CD4-positive, alpha-beta T cell (primary cell): ENCODE measurements at regions of chr19 and their contacts with region 1.

Region 1: DNA sequence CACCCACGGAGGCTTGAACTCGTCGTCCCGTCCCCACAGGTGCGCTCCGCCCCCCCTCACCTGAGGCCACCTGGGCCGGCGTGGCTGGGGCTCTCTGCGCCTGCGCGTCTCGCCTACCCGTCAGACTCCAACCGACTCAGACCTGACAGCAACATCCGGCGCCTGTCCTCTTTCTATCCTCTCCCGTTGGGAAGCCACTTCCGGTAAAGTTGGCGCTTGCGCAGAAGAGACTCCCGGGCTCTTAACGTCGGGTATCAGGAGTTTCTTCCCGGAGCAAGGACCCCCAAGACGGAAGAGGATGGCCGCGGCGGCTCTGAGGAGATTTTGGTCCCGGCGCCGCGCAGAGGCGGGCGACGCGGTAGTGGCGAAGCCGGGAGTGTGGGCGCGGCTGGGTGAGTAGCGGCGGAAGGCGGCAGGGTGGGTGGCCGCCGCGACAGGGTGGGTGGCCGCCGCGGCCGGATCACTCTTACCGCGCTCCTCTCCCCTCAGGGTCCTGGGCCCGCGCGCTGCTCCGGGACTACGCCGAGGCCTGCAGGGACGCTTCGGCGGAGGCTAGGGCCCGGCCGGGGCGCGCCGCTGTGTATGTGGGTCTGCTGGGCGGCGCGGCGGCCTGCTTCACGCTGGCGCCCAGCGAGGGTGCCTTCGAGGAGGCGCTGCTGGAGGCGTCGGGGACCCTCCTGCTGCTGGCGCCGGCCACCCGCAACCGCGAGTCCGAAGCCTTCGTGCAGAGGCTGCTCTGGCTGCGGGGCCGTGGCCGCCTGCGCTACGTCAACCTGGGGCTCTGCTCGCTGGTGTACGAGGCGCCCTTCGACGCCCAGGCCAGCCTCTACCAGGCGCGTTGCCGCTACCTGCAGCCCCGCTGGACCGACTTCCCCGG is at the starts of genes TIMM29 and YIPF2:
- DNase-seq: peak; percentile 87 to 97 (median 92)
- ATAC-seq: peak; percentile 90
- H3K4me3 ChIP-seq: peak within 1 kb of the TSS; percentile 75
- H3K4me3 Mint-ChIP-seq: peak within 1 kb of the TSS; percentile 97
- H3K27ac ChIP-seq: peak within 1 kb of the TSS; percentile 46 to 61
- H3K27ac Mint-ChIP-seq: peak within 1 kb of the TSS; percentile 89
- H3K4me1 ChIP-seq: peaks cover 33% of the 10 kb centered on the region
- H3K4me1 Mint-ChIP-seq: peaks cover 16% of the 10 kb centered on the region
- H3K27me3 ChIP-seq: no peaks in the 10 kb centered on the region
- H3K27me3 Mint-ChIP-seq: no peaks in the 10 kb centered on the region
- CTCF ChIP-seq: no peak
- total RNA-seq, gene TIMM29: 22.6 to 24.8 TPM
- total RNA-seq, gene YIPF2: 21.1 to 21.7 TPM

Region 2: DNA sequence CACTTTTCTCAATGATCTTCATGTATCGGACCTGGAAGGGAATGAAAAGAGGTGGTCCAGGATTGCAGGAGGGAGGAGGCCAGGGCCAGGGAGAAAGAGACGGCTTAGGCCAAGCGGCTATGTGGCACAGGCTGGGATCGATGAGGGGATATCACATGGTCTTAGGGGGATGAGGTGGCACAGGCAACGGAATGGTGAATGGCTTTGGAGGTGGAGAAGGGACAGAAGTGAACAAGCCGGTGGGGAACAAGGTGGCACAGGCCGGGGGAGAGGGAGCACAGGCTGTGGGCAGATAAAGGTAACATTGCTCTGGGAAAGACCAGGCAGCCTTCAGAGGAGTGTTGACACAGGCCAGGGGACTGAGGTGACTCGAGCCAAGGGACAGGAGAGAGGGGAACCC is 354.3 kb before region 1 on chr19:
- CTCF ChIA-PET with region 1: no interaction called
- POLR2A ChIA-PET with region 1: no interaction called
- intact Hi-C with region 1: loop called in 1 of 2 experiments (anchors 5 kb)
- DNase-seq: peak in 1 of 14 experiments; percentile 19
- ATAC-seq: no peak
- H3K4me3 ChIP-seq: no peak overlapping the region
- H3K4me3 Mint-ChIP-seq: no peak overlapping the region
- H3K27ac ChIP-seq: no peak overlapping the region
- H3K27ac Mint-ChIP-seq: no peak overlapping the region
- H3K4me1 ChIP-seq: peaks cover 11% of the 10 kb centered on the region
- H3K4me1 Mint-ChIP-seq: peaks cover 12% of the 10 kb centered on the region
- H3K27me3 ChIP-seq: no peaks in the 10 kb centered on the region
- H3K27me3 Mint-ChIP-seq: no peaks in the 10 kb centered on the region
- CTCF ChIP-seq: no peak

Region 3: DNA sequence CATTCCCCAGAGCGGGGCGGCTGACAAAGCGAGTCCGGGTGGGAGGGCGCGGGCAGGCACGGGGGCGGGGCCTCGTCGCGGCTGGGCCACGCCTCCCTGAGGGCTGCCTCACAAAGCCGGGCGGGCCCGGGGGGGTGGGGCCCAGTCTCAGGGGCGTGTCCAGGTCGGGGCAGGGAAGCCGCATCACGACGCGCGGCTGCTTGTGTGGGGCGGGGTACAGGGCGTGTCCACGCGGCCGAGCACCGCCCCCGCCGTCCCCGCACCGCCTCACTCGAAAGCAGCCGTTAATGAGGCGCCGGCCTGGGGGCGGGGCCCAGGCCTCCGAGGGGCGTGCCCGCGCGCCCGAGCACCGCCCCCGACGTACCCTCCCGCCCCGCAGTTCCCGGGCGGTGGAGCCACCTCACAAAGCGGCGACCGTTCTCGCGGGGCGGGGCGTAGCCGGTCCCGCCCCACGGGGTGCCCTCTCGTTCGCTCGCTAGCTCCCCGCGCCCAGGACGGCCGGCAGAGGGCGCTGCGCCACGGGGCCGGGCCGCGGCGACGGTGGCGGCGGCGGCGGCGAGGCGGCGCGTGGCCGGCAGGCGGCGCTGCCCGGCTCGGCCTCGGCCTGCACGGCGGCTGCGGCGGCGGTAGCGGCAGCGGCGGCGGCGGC is 57.7 kb before region 1 on chr19 and contains the start of gene CARM1:
- CTCF ChIA-PET with region 1: no interaction called
- POLR2A ChIA-PET with region 1: no interaction called
- intact Hi-C with region 1: loop called (anchors 1 to 10 kb)
- DNase-seq: peak; percentile 98 to 100 (median 99)
- ATAC-seq: peak; percentile 83
- H3K4me3 ChIP-seq: peak within 1 kb of the TSS; percentile 69
- H3K4me3 Mint-ChIP-seq: peak within 1 kb of the TSS; percentile 86
- H3K27ac ChIP-seq: peak within 1 kb of the TSS in 1 of 2 donors; percentile 57
- H3K27ac Mint-ChIP-seq: peak within 1 kb of the TSS; percentile 54
- H3K4me1 ChIP-seq: peaks cover 26% of the 10 kb centered on the region
- H3K4me1 Mint-ChIP-seq: peaks cover 18% of the 10 kb centered on the region
- H3K27me3 ChIP-seq: no peaks in the 10 kb centered on the region
- H3K27me3 Mint-ChIP-seq: no peaks in the 10 kb centered on the region
- CTCF ChIP-seq: peak; percentile 34
- total RNA-seq, gene CARM1: 17.5 to 18.0 TPM

Region 4: DNA sequence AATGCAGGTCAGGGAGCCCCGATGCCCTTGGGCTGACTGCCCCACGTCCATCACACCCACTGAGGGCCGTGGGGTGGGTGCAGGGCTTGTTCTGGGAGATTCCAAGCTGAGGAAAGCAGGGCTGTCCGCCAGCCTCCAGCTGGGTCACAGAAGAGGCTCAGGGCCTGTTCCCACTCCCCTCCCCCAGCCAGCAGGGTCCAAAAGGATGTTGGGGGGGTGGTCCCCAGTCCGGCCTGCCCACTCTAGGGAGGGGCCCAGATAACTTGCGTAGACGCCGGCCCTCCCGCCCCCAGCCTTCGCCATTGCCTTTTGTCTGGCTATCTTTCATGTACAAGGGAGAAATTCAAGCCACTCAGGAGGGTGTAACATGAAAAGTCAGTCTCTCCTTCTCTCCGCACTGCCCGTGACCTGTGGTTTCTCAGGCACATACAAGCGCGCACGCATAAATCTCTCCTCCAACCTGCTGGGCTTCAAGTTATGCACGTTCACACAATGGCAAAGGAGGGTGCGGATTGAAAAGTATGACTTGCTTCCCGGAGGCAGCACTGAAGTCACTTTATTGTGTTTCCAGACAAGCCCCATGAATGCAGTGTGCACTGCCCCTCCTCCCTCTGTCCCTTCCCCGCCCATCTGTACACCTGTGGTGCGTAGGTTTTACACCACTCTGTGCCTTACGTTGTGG is 37.2 kb before region 1 on chr19:
- CTCF ChIA-PET with region 1: no interaction called
- POLR2A ChIA-PET with region 1: no interaction called
- intact Hi-C with region 1: no loop called
- DNase-seq: no peak
- ATAC-seq: no peak
- H3K4me3 ChIP-seq: no peak overlapping the region
- H3K4me3 Mint-ChIP-seq: no peak overlapping the region
- H3K27ac ChIP-seq: no peak overlapping the region
- H3K27ac Mint-ChIP-seq: no peak overlapping the region
- H3K4me1 ChIP-seq: peaks cover 5% of the 10 kb centered on the region
- H3K4me1 Mint-ChIP-seq: peaks cover 10% of the 10 kb centered on the region
- H3K27me3 ChIP-seq: no peaks in the 10 kb centered on the region
- H3K27me3 Mint-ChIP-seq: no peaks in the 10 kb centered on the region
- CTCF ChIP-seq: no peak